ENCODE measurements at regions of chr4 and their contacts with region 1.

Region 1: DNA sequence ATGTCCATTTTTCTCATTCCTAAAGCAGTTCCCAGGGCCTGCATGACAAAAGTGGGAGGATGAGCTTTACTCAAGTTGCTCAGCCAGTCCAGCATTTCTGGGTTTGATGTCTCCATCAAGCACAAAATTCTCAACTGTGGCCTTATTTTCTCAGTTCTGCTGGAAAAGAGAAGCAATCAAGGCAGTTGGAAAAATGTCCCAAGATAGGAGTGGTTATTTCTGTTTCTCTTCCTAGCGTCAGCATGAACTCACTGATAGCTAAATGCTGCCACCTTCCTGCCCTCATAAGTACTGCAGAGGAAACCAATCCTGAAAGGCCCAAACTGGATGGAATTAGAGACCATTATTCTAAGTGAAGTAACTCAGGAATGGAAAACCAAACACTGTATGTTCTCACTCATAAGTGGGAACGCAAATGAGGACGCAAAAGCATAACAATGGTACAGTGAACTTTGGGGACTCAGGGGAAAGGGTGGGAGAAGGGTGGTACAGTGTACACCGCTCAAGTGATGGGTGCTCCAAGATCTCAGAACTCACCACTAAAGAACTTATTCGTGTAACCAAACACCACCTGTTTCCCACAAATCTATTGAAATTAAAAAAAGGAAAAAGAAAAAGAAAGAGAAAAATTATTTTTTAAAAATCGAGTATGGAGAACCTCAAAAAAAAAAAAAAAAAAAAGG is 29.6 kb downstream of the ADH7 start:
- DNase-seq: peak; percentile 82
- ATAC-seq: peak; percentile 81
- H3K4me3 ChIP-seq: no peak overlapping the region
- H3K27ac ChIP-seq: peak overlapping the region; percentile 99; the same call in 1 of the 2 replicates
- H3K4me1 ChIP-seq: peaks cover 13% of the 10 kb centered on the region
- H3K27me3 ChIP-seq: no peaks in the 10 kb centered on the region
- CTCF ChIP-seq: peak; percentile 96
- POLR2A ChIP-seq: no peak
- RAD21 ChIP-seq: peak; percentile 97

Region 2: DNA sequence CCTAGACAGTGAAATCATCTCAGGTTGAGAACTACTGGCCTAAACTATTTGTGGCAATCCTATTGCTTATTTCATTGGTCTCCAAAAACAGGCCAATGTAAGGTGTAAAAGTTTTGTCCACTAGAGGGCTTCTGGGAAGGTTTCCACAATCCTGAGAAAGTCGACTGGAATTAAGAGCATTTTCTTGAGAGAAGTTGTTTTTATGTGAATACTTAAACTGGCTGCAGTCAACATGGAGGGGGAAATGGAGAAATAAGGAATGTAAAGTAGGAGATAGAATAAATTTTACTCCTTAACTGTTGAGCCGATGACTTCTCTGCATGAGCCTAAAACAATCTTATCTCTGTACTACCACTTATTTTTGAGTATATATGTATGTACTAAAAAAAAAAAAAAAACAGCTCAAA is 465.7 kb before region 1 on chr4:
- CTCF ChIA-PET with region 1: no interaction called
- POLR2A ChIA-PET with region 1: no interaction called
- dilution Hi-C with region 1: no loop called
- in situ Hi-C with region 1: no loop called
- intact Hi-C with region 1: loop called (anchors 2 kb)
- DNase-seq: peak; percentile 80
- ATAC-seq: peak; percentile 80
- H3K4me3 ChIP-seq: no peak overlapping the region
- H3K27ac ChIP-seq: no peak overlapping the region
- H3K4me1 ChIP-seq: peaks cover 2% of the 10 kb centered on the region; the same call in 1 of the 2 replicates
- H3K27me3 ChIP-seq: no peaks in the 10 kb centered on the region
- CTCF ChIP-seq: peak; percentile 76
- POLR2A ChIP-seq: no peak
- RAD21 ChIP-seq: peak; percentile 61

Region 3: GRCh38 chr4:99088481-99089365 is 316.9 kb before region 1 on chr4 and contains the start of gene ADH5:
- CTCF ChIA-PET with region 1: interaction called, 5 read pairs
- POLR2A ChIA-PET with region 1: interaction called, 3 read pairs
- dilution Hi-C with region 1: no loop called
- in situ Hi-C with region 1: no loop called
- intact Hi-C with region 1: loop called (anchors 10 kb)
- DNase-seq: peak; percentile 81
- ATAC-seq: peak; percentile 93
- H3K4me3 ChIP-seq: peak within 1 kb of the TSS; percentile 83
- H3K27ac ChIP-seq: peak within 1 kb of the TSS; percentile 97
- H3K4me1 ChIP-seq: peaks cover 2% of the 10 kb centered on the region; the same call in 1 of the 2 replicates
- H3K27me3 ChIP-seq: no peaks in the 10 kb centered on the region
- CTCF ChIP-seq: no peak
- POLR2A ChIP-seq: peak; percentile 86
- RAD21 ChIP-seq: no peak
- total RNA-seq, gene ADH5: 178 and 246 TPM in 2 replicates

Region 4: GRCh38 chr4:99159699-99160098 is 245.9 kb before region 1 on chr4:
- CTCF ChIA-PET with region 1: no interaction called
- POLR2A ChIA-PET with region 1: no interaction called
- dilution Hi-C with region 1: no loop called
- in situ Hi-C with region 1: no loop called
- intact Hi-C with region 1: loop called (anchors 1 kb)
- DNase-seq: no peak
- ATAC-seq: peak; percentile 27; the same call in 1 of the 2 replicates
- H3K4me3 ChIP-seq: no peak overlapping the region
- H3K27ac ChIP-seq: no peak overlapping the region
- H3K4me1 ChIP-seq: peaks cover 2% of the 10 kb centered on the region; the same call in 1 of the 2 replicates
- H3K27me3 ChIP-seq: no peaks in the 10 kb centered on the region
- CTCF ChIP-seq: 0 out of 2 replicates have a peak, but pooled peaks have one; percentile 17
- POLR2A ChIP-seq: no peak
- RAD21 ChIP-seq: peak; percentile 4; the same call in 1 of the 2 replicates

Region 5: GRCh38 chr4:99300934-99301333 is 104.6 kb before region 1 on chr4:
- CTCF ChIA-PET with region 1: no interaction called
- POLR2A ChIA-PET with region 1: no interaction called
- dilution Hi-C with region 1: no loop called
- in situ Hi-C with region 1: no loop called
- intact Hi-C with region 1: loop called (anchors 2 kb)
- DNase-seq: peak; percentile 97
- ATAC-seq: peak; percentile 87
- H3K4me3 ChIP-seq: no peak overlapping the region
- H3K27ac ChIP-seq: peak overlapping the region; percentile 99; the same call in 1 of the 2 replicates
- H3K4me1 ChIP-seq: peaks cover 5% of the 10 kb centered on the region
- H3K27me3 ChIP-seq: no peaks in the 10 kb centered on the region
- CTCF ChIP-seq: no peak
- POLR2A ChIP-seq: no peak
- RAD21 ChIP-seq: no peak

Region 6: DNA sequence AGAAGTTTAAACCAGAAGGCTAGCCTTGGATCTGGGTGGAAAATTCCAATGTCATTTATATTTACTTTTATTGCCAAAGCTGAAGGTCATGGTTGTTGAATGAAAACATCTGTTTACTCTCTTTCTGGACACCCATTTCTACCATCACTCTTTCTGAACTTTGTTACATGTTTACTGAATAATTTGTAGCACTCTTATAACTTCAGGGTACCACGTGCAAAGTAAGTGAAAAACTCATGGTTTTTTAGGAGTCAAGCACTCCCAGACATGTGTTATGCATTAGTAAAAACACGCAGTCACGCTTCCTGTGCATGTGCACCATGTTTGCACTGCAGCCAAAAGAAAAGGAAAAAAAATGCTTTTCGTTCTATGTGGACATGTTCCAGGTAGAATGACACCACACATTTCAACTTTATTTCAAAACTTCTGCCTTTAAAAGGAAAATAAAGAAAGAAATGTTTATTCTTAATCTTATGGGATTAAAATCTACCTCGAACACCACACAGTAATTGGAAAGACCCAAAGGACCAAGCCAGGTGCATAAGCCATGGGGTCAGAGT is 21.7 kb before region 1 on chr4:
- CTCF ChIA-PET with region 1: interaction called, 4 read pairs
- POLR2A ChIA-PET with region 1: no interaction called
- dilution Hi-C with region 1: no loop called
- in situ Hi-C with region 1: no loop called
- intact Hi-C with region 1: loop called (anchors 2 kb)
- DNase-seq: peak; percentile 97
- ATAC-seq: peak; percentile 60
- H3K4me3 ChIP-seq: no peak overlapping the region
- H3K27ac ChIP-seq: peak overlapping the region; percentile 95; the same call in 1 of the 2 replicates
- H3K4me1 ChIP-seq: peaks cover 13% of the 10 kb centered on the region
- H3K27me3 ChIP-seq: no peaks in the 10 kb centered on the region
- CTCF ChIP-seq: no peak
- POLR2A ChIP-seq: no peak
- RAD21 ChIP-seq: no peak

Region 7: GRCh38 chr4:99462875-99463464 is 57.4 kb after region 1 on chr4:
- CTCF ChIA-PET with region 1: interaction called, 5 read pairs
- POLR2A ChIA-PET with region 1: no interaction called
- dilution Hi-C with region 1: no loop called
- in situ Hi-C with region 1: no loop called
- intact Hi-C with region 1: loop called (anchors 1 kb)
- DNase-seq: peak; percentile 72
- ATAC-seq: peak; percentile 98
- H3K4me3 ChIP-seq: no peak overlapping the region
- H3K27ac ChIP-seq: no peak overlapping the region
- H3K4me1 ChIP-seq: no peaks in the 10 kb centered on the region
- H3K27me3 ChIP-seq: 0 out of 2 replicates have a peak, but pooled peaks cover 1% of the 10 kb centered on the region
- CTCF ChIP-seq: peak; percentile 92
- POLR2A ChIP-seq: no peak
- RAD21 ChIP-seq: peak; percentile 98

Measured in IMR-90 (cell line).